PC-9 (cell line): ENCODE measurements at regions of chr22 and their contacts with region 1.

Region 1: GRCh38 chr22:37870273-37870672 is 21.1 kb downstream of the EIF3L start:
- DNase-seq: no peak
- H3K4me3 ChIP-seq: no peak overlapping the region
- H3K27ac ChIP-seq: no peak overlapping the region
- H3K4me1 ChIP-seq: no peaks in the 10 kb centered on the region
- H3K27me3 ChIP-seq: no peaks in the 10 kb centered on the region
- CTCF ChIP-seq: no peak

Region 2: DNA sequence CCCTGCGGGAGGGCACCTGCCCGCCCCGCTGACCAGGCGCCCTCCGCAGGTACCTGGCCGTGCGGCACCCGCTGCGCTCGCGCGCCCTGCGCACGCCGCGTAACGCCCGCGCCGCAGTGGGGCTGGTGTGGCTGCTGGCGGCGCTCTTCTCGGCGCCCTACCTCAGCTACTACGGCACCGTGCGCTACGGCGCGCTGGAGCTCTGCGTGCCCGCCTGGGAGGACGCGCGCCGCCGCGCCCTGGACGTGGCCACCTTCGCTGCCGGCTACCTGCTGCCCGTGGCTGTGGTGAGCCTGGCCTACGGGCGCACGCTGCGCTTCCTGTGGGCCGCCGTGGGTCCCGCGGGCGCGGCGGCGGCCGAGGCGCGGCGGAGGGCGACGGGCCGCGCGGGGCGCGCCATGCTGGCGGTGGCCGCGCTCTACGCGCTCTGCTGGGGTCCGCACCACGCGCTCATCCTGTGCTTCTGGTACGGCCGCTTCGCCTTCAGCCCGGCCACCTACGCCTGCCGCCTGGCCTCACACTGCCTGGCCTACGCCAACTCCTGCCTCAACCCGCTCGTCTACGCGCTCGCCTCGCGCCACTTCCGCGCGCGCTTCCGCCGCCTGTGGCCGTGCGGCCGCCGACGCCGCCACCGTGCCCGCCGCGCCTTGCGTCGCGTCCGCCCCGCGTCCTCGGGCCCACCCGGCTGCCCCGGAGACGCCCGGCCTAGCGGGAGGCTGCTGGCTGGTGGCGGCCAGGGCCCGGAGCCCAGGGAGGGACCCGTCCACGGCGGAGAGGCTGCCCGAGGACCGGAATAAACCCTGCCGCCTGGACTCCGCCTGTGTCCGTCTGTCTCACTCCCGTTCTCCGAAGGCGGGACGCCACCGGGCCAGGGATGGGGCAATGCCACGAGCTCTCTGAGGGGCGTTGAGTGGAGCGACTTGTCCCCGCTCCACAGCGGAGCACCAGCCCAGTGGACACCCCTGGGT is 45.3 kb before region 1 on chr22:
- CTCF ChIA-PET with region 1: no interaction called
- POLR2A ChIA-PET with region 1: interaction called, 28 read pairs
- intact Hi-C with region 1: no loop called
- DNase-seq: no peak
- H3K4me3 ChIP-seq: no peak overlapping the region
- H3K27ac ChIP-seq: no peak overlapping the region
- H3K4me1 ChIP-seq: no peaks in the 10 kb centered on the region
- H3K27me3 ChIP-seq: no peaks in the 10 kb centered on the region
- CTCF ChIP-seq: no peak

Region 3: DNA sequence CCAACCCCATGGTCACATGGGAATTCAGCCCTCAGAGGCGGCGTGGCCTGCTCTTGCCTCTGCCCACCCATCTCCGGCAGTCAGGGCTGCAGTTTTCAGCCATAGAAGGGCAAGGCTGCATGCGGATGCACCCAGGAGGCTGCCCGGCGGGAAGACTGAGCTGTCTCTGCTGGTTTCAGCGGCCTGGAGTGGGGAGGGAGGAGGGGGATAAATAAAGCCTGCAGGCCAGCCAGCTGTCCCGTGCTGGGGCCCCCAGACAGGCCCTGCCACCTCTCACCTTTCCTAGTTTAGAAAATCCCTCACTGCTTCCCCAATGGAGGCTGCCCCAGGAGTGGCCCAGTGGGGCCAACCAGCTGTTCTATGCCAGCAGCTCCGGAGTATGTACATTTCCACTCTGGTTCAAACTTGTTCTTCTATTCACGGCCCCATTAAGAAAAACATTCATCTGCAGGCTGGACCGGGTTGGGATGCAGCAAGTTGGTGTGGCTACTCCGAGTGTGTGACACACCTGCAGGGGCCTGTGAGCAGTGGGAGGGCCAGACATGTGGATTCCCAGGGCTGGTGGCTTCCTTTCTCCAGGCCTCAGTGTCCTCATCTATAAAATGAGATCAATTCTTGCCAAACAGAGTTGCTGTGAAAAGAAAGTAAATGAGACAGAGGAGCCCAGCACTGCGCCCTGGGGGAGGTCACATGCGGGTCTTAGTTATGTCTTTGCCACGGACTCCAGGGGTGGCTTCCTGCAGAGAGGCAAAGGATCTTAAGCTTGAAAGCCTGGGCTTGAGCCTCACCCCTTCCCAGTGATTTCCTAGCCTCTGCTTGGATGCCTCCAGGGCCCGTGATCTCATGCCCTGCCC is 40.8 kb after region 1 on chr22:
- CTCF ChIA-PET with region 1: no interaction called
- POLR2A ChIA-PET with region 1: no interaction called
- intact Hi-C with region 1: no loop called
- DNase-seq: no peak
- H3K4me3 ChIP-seq: no peak overlapping the region
- H3K27ac ChIP-seq: no peak overlapping the region
- H3K4me1 ChIP-seq: peaks cover 15% of the 10 kb centered on the region
- H3K27me3 ChIP-seq: no peaks in the 10 kb centered on the region
- CTCF ChIP-seq: no peak

Region 4: DNA sequence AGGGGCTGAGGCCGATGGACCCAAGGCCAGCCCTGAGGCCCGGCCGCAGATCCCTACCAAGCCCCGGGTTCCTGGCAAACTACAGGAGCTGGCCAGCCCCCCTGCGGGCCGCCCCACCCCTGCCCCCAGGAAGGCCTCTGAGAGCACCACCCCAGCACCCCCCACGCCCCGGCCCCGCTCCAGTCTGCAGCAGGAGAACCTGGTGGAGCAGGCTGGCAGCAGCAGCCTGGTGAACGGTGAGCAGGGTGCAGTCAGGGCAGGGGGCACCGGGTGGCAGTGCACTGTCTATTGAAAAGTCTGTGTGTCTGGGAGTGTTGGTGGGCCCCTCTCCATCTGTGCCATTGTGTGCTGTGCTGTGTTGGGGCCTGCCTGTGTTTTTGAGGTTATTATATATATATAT is 51.9 kb after region 1 on chr22:
- CTCF ChIA-PET with region 1: no interaction called
- POLR2A ChIA-PET with region 1: no interaction called
- intact Hi-C with region 1: no loop called
- DNase-seq: no peak
- H3K4me3 ChIP-seq: no peak overlapping the region
- H3K27ac ChIP-seq: no peak overlapping the region
- H3K4me1 ChIP-seq: no peaks in the 10 kb centered on the region
- H3K27me3 ChIP-seq: no peaks in the 10 kb centered on the region
- CTCF ChIP-seq: no peak